ENCODE measurements at regions of chr17 and their contacts with region 1.

Region 1: DNA sequence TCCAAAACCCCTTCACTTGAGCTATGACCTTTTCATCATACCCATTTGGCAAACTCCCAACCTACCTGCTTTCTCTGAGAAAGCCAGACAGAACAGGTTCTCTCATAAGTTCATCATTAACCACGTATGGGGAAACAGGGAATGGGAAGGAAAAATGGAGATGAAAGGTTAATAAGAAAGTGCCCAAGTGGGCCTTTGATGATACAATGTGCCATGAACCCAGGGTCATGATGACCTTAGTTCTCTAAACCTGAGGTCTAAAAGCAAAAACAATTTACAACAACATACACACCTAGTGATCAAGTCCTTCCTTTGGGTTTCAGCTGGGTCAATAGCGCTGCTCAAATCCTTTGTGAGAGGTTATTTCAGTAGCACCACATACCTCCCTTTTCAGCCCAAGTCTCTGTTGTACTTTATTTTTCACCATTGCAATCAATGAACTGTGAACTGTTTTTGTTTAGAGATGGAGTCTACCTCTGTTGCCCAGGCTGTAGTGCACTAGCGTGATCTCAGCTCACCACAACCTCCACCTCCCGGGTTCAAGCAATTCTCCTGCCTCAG is 14.5 kb upstream of the RANGRF start:
- DNase-seq: no peak
- H3K4me3 ChIP-seq: no peak overlapping the region
- H3K27ac ChIP-seq: no peak overlapping the region
- H3K4me1 ChIP-seq: no peaks in the 10 kb centered on the region
- H3K27me3 ChIP-seq: no peaks in the 10 kb centered on the region
- CTCF ChIP-seq: no peak
- POLR2A ChIP-seq: no peak

Region 2: DNA sequence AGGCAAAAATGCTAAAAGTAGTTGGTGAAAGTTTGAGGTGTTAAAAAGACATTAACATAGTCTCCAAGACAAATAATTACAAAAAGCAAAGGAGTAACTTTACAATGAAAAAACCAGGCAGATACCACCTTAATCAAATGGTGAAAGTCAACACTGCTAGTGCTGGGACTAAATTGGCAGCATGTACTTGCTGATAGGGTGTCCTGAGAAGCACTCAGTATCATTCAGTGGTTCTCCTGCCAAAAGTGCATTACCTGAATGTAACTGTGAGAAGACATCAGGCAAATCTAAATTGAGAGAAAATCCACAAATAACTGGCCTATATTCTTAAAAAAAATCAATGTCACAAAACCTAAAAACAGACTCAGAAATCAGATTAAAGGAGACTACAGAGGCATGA is 1641.4 kb before region 1 on chr17:
- intact Hi-C with region 1: loop called (anchors 5 kb)
- DNase-seq: no peak
- H3K4me3 ChIP-seq: no peak overlapping the region
- H3K27ac ChIP-seq: no peak overlapping the region
- H3K4me1 ChIP-seq: no peaks in the 10 kb centered on the region
- H3K27me3 ChIP-seq: no peaks in the 10 kb centered on the region
- CTCF ChIP-seq: no peak
- POLR2A ChIP-seq: no peak

Measured in uterus (tissue), 4 donors.